MCF 10A (cell line): ENCODE measurements at regions of chr1 and their contacts with region 1.

Region 1: GRCh38 chr1:79323240-79324025 is 316.9 kb upstream of the ADGRL4 start:
- DNase-seq: peak; percentile 96
- H3K4me3 Mint-ChIP-seq: peak overlapping the region; percentile 10
- H3K27ac Mint-ChIP-seq: peak overlapping the region; percentile 49
- H3K4me1 Mint-ChIP-seq: peaks cover 15% of the 10 kb centered on the region
- H3K27me3 Mint-ChIP-seq: no peaks in the 10 kb centered on the region
- CTCF ChIP-seq: no peak

Region 2: GRCh38 chr1:79304131-79304530 is 19.3 kb before region 1 on chr1:
- CTCF ChIA-PET with region 1: no interaction called
- POLR2A ChIA-PET with region 1: interaction called, 5 read pairs
- intact Hi-C with region 1: loop called (anchors 1 kb)
- DNase-seq: peak; percentile 54
- H3K4me3 Mint-ChIP-seq: no peak overlapping the region
- H3K27ac Mint-ChIP-seq: peak overlapping the region; percentile 47
- H3K4me1 Mint-ChIP-seq: peaks cover 9% of the 10 kb centered on the region
- H3K27me3 Mint-ChIP-seq: no peaks in the 10 kb centered on the region
- CTCF ChIP-seq: no peak